ENCODE measurements at regions of chr2 and their contacts with region 1.

Region 1: DNA sequence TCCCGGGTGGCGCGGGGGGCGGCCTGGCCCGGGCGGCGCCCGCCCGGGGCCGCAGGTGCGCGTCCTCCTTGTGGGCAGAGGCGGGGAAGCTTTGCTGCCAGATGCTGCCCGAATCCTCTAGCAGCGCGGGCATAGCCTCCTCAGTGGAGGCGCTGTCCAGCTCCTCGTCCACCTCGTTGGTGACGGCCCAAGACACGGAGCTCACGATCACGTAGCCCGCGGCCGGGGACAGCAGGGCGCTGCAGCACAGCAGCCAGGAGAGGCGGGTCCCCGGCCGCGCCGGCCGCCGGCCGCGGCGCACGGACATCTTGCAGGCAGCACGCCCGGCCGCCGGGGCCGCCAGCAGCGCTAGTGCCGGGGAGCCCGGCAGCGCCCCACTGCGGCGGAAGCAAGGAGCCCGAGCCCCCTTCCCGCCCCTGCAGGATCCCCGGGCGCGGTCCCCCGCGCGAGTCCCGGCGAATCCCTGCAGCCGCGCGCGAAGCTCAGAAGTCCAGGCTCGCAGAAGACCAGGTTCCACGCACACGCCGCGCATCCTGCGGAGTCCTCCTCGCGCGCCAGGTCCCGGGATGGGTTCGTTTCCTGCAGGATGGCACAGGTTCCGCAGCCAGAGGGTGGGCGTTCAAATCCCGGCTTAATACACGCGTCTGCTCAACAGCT is at the start of gene CREG2:
- DNase-seq: peak; percentile 11 to 90 (median 76)
- H3K4me3 ChIP-seq: peak within 1 kb of the TSS; percentile 52 to 84 (median 71)
- H3K27ac ChIP-seq: peak within 1 kb of the TSS in 53 of 59 donors; percentile 4 to 89 (median 74)
- H3K27me3 ChIP-seq: peaks cover 0 to 6% (median 0%) of the 10 kb centered on the region in 45 donors
- CTCF ChIP-seq: peak in 54 of 56 donors; percentile 31 to 91 (median 68)
- total RNA-seq, gene CREG2: 31.8 to 189 (median 122) TPM

Region 2: DNA sequence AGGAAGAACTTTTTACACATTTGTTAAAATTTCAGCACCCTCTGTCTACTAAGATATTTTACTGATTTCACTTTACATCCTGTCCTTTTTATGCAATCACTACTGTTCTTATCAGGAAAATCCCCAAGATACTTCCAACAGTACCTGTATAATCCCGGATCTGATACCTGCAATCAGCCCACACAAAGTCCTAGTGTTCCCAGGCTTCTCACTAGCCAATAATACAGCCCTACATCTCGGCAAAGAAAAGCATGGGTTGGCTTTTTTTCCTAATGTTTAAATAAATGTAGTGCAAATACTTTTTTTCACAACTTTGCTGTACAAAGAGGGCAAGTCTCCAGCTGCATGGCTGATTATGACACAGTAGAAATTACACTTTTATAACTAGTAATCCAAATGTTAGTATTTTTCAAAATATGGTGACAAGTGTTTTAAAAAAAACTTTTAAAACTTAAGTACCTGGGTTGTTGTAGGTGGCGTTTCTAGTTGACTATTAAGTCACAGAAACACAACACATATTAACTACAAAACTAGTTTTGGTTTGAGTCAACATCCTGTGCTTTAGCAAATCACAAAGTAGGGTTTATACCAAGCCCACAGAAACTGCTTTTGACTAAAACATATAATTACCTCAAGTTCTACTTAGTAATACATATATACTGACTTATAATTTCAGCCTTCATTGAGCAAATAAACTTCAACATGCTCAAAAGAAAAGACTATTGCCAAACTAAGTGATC is 115.1 kb before region 1 on chr2:
- intact Hi-C with region 1: loop called in 1 of 2 experiments (anchors 10 kb)
- DNase-seq: no peak
- H3K4me3 ChIP-seq: no peak overlapping the region
- H3K27ac ChIP-seq: peak overlapping the region in 1 of 59 donors; percentile 12
- H3K27me3 ChIP-seq: no peaks in the 10 kb centered on the region
- CTCF ChIP-seq: no peak

Region 3: GRCh38 chr2:101308432-101309210 is 78.7 kb before region 1 on chr2 and contains the start of gene RNF149:
- intact Hi-C with region 1: loop called in 1 of 2 experiments (anchors 10 kb)
- DNase-seq: peak; percentile 76 to 95 (median 89)
- H3K4me3 ChIP-seq: peak within 1 kb of the TSS; percentile 70 to 100 (median 92)
- H3K27ac ChIP-seq: peak within 1 kb of the TSS; percentile 67 to 97 (median 91)
- H3K27me3 ChIP-seq: no peaks in the 10 kb centered on the region
- CTCF ChIP-seq: peak in 33 of 56 donors; percentile 10 to 64 (median 26)
- total RNA-seq, gene RNF149: 30.6 to 66.5 (median 47.5) TPM

Region 4: GRCh38 chr2:101341901-101342624 is 45.2 kb before region 1 on chr2:
- intact Hi-C with region 1: loop called (anchors 2 kb)
- DNase-seq: peak; percentile 46 to 86 (median 79)
- H3K4me3 ChIP-seq: peak overlapping the region in 12 of 59 donors; percentile 8 to 31 (median 18)
- H3K27ac ChIP-seq: peak overlapping the region in 14 of 59 donors; percentile 7 to 87 (median 36)
- H3K27me3 ChIP-seq: no peaks in the 10 kb centered on the region
- CTCF ChIP-seq: peak; percentile 65 to 94 (median 87)

Region 5: GRCh38 chr2:101349893-101350662 is 37.2 kb before region 1 on chr2:
- intact Hi-C with region 1: loop called in 1 of 2 experiments (anchors 2 kb)
- DNase-seq: peak in 5 of 10 donors; percentile 41 to 72 (median 59)
- H3K4me3 ChIP-seq: peak overlapping the region in 9 of 59 donors; percentile 1 to 43 (median 20)
- H3K27ac ChIP-seq: peak overlapping the region; percentile 21 to 94 (median 83)
- H3K27me3 ChIP-seq: no peaks in the 10 kb centered on the region
- CTCF ChIP-seq: peak in 53 of 56 donors; percentile 16 to 68 (median 49)

Region 6: GRCh38 chr2:101401906-101402305 is 14.6 kb after region 1 on chr2:
- intact Hi-C with region 1: no loop called
- DNase-seq: no peak
- H3K4me3 ChIP-seq: no peak overlapping the region
- H3K27ac ChIP-seq: no peak overlapping the region
- H3K27me3 ChIP-seq: no peaks in the 10 kb centered on the region
- CTCF ChIP-seq: peak in 2 of 56 donors; percentile 14 to 19

Region 7: GRCh38 chr2:101597351-101597944 is 210.2 kb after region 1 on chr2:
- intact Hi-C with region 1: no loop called
- DNase-seq: peak in 1 of 10 donors; percentile 56
- H3K4me3 ChIP-seq: no peak overlapping the region
- H3K27ac ChIP-seq: peak overlapping the region in 3 of 59 donors; percentile 11 to 15 (median 15)
- H3K27me3 ChIP-seq: no peaks in the 10 kb centered on the region
- CTCF ChIP-seq: no peak